Dorsolateral prefrontal cortex (tissue), 120 donors: ENCODE measurements at regions of chr5 and their contacts with region 1.

Region 1: DNA sequence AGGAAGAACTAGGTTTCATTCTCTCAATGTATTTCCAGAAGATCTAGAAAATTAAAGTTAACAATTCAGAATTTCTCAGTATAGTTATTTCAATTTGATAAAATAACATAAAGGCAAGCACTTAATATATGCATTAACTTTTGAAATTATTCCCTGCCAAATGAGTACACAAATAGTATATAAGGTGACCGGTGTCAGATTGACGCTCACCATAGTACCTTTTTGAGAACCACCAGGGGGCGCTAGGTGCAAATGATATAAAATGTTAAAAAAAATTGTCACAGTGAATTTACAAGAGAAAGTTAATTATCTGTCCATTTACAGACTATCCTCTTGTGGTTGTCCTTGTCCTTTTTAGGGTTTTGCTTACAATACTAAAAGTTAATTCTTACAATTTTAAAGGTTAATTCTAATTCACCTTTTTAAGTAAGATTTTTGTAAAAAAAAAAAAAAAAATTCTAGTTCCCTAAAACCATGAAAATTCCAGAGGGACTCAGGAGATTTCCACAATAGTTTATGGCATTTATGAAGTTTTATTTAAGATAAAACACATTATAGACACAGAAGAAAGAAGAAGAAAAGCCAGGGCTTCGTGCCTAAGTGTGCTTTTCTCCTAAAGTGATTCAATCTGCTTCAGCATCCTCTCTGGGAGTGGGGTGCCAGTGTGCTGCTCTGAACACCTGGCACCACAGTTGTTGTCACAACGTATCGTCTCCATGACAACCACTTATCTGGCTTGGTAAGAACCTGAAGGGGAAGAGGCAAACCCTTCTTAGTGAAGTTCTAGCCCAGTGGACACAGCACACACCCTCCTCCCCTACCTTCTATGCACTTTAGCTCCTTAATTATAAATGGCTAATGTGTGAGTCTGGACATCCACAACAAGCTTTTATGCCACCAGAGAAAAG is 1.7 kb downstream of the ADAMTS16 start:
- DNase-seq: peak in 4 of 10 donors; percentile 48 to 73 (median 59)
- H3K4me3 ChIP-seq: peak overlapping the region in 53 of 59 donors; percentile 39 to 75 (median 60)
- H3K27ac ChIP-seq: peak overlapping the region in 1 of 59 donors; percentile 76
- H3K27me3 ChIP-seq: peaks cover 0 to 28% (median 12%) of the 10 kb centered on the region in 45 donors
- CTCF ChIP-seq: peak; percentile 79 to 98 (median 92)

Region 2: DNA sequence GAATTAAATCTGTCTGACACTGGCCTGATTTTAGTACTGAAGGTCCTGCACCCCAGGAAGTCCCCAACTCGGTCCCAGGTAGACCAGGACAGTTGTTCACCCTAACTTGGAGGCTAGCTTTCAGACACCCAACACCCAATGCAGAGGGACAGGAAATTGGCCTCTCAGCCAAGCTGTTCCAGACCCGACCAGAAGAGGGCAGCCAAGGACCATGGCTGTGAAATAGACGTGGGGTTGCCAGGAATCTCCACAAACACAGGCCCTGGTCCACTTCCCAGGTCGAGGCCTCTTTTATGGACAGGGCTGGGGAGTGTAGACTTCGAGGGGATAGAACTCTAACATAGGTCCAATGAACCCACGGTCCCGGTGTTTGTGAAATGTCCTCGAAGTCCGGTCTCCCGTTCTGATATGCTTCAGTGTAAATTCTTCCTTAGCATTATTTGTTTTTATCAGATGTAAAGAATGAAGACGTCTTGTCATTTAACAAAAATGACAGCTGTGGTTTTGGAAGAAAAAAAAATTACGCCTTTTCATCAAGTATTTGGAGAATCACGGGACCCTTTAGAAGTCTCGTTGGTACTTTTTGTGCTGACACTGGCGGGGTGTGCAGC is 262.1 kb before region 1 on chr5:
- intact Hi-C with region 1: loop called (anchors 5 to 10 kb)
- DNase-seq: peak; percentile 65 to 90 (median 86)
- H3K4me3 ChIP-seq: no peak overlapping the region
- H3K27ac ChIP-seq: no peak overlapping the region
- H3K27me3 ChIP-seq: no peaks in the 10 kb centered on the region
- CTCF ChIP-seq: peak; percentile 70 to 98 (median 92)

Region 3: DNA sequence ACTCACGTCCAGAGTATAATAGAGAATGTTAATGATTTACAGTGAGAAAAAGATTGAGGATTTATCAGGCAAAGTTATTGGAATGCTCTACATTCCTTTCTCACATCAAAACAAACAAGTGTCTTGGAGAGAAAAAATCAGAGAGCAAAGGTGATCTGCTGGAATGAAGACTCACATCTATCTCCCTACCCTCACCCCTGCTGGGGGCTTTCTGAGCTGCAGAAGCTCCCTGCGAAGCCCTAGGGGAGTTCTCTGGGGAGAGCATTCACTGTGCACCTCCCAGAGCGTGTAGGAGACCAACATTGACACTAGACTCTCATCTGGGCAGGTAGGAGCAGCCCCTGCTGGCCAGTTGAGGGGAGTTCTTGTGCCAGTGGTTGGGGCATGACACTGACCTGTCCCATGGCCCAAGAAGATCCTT is 78.3 kb before region 1 on chr5:
- intact Hi-C with region 1: no loop called
- DNase-seq: no peak
- H3K4me3 ChIP-seq: no peak overlapping the region
- H3K27ac ChIP-seq: no peak overlapping the region
- H3K27me3 ChIP-seq: peaks cover 0 to 28% (median 0%) of the 10 kb centered on the region in 45 donors
- CTCF ChIP-seq: peak in 2 of 56 donors; percentile 11 to 14

Region 4: DNA sequence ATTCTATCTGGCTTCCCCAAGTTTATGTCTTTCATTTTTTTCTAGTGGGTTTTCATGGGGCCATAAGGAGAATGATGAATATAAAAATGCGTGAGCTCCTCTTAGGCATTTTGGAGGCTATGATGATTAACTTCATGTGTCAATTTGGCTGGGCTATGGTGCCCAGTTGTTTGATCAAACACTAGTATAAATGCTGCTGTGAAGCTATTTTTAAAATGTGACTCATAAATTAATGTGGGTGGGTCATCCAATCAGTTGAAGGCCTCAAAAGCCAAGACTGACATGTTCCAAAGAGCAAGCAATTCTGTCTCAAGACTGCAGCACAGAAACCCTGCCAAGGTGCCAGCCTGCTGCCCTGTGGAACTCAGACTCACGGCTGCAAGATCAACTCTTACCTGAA is 256.2 kb after region 1 on chr5:
- intact Hi-C with region 1: loop called in 1 of 2 experiments (anchors 5 kb)
- DNase-seq: no peak
- H3K4me3 ChIP-seq: no peak overlapping the region
- H3K27ac ChIP-seq: no peak overlapping the region
- H3K27me3 ChIP-seq: no peaks in the 10 kb centered on the region
- CTCF ChIP-seq: no peak